Heart left ventricle (tissue), 16 donors: ENCODE measurements at regions of chr2 and their contacts with region 1.

Region 1: DNA sequence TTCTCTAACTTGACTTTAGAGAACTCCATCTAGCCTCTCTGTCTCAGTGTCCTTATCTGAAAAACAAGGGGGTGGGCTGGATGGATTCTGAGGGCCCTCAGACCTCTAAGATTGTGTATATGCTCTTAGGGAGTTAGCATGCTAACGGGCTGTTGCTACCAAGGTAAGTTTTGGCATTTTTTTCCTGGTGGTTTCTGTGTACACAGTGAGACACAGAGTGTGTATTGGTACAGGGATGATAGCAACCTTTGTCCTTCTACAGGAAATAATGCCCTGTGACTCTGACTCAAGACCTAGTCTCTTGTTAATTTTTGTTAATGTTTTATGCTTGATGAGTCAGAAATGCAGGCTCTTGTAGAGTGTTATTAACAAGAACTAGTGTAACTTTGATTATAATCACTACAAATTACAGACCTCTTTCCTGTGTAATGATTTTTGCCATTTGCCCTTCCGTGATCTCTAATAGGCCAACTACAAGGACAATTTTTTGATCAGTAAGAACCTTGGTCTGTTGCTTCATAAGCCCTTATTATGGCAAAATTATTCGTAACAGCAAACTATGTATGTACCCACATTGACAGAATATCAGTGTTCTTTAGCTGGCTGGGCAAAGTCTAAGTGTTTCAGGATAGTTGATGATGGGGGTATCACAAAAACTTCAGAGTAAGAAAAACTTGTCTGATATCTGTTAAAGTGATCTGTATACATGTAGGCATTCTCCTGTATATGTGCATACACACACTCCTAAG is 89.7 kb downstream of the SPTBN1 start:
- DNase-seq: no peak
- ATAC-seq: no peak
- H3K4me3 ChIP-seq: no peak overlapping the region
- H3K27ac ChIP-seq: peak overlapping the region in 2 of 12 donors; percentile 42 to 55
- H3K4me1 ChIP-seq: peaks cover 15 to 95% (median 83%) of the 10 kb centered on the region in 12 donors
- H3K27me3 ChIP-seq: no peaks in the 10 kb centered on the region
- CTCF ChIP-seq: no peak
- POLR2A ChIP-seq: no peak

Region 2: DNA sequence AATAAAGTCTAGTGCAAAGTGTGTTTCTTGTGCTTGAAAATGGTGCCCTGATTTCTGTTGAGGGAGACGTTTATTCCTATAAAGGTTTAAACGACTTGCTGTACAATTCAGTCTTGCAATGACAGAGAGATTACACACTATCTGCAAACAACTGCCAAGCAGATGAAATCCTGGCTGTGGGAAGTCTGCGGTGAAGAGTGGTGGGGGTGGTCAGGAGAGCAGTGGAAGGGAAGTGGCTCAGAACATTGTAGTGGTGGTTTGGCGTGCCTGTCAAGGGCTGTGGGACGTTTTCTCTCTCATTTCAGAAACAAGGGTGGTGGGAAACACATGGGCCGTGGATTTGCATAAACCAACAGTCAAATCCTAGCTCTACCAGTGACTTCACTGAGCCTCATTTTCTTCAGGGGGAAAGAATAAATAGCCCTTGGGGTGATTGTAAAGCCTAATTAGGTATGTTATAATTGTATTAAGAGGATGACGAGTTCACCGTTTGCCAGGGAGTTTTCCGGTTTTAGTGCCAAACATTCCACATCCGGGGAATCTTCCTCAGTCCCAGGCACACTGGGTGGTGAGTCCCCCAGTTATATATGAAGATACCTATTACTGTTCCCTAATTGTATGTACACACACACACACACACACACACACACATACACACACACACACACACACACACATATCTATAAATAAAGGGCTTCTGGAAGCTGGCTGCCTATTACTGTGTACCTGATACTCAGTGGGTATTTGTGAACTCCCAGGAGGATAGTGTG is 25.2 kb after region 1 on chr2:
- intact Hi-C with region 1: loop called in 1 of 10 experiments (anchors 1 kb)
- DNase-seq: peak in 4 of 5 donors; percentile 56 to 64 (median 60)
- ATAC-seq: peak; percentile 40 to 63 (median 54)
- H3K4me3 ChIP-seq: no peak overlapping the region
- H3K27ac ChIP-seq: peak overlapping the region in 11 of 12 donors; percentile 18 to 91 (median 72)
- H3K4me1 ChIP-seq: peaks cover 46 to 95% (median 83%) of the 10 kb centered on the region in 12 donors
- H3K27me3 ChIP-seq: no peaks in the 10 kb centered on the region
- CTCF ChIP-seq: no peak
- POLR2A ChIP-seq: no peak